K562 (cell line): ENCODE measurements at regions of chr1 and their contacts with region 1.

Region 1: GRCh38 chr1:202315576-202316168 is 26.1 kb downstream of the UBE2T start:
- DNase-seq: peak; percentile 80 to 82 (median 81)
- ATAC-seq: peak; percentile 95
- H3K4me3 ChIP-seq: no peak overlapping the region
- H3K27ac ChIP-seq: no peak overlapping the region
- H3K4me1 ChIP-seq: peaks cover 0 to 12% of the 10 kb centered on the region in 2 experiments; a peak in 1 of 5 replicates
- H3K27me3 ChIP-seq: peaks cover 20 to 52% of the 10 kb centered on the region in 2 experiments
- CTCF ChIP-seq: peak; percentile 94 to 98 (median 97)
- EP300 ChIP-seq: no peak
- POLR2A ChIP-seq: no peak
- RAD21 ChIP-seq: peak; percentile 85 to 96

Region 2: GRCh38 chr1:201946224-201946908 is 369.3 kb before region 1 on chr1 and contains the start of gene LMOD1:
- CTCF ChIA-PET with region 1: no interaction called
- POLR2A ChIA-PET with region 1: no interaction called
- in situ Hi-C with region 1: no loop called
- intact Hi-C with region 1: no loop called
- DNase-seq: peak; percentile 63 to 89 (median 77)
- ATAC-seq: peak; percentile 84
- H3K4me3 ChIP-seq: peak within 1 kb of the TSS; percentile 12
- H3K27ac ChIP-seq: no peak within 1 kb of the TSS; the same call in 2 of the 3 replicates
- H3K4me1 ChIP-seq: peaks cover 27 to 36% of the 10 kb centered on the region in 2 experiments
- H3K27me3 ChIP-seq: no peaks in the 10 kb centered on the region
- CTCF ChIP-seq: no peak
- EP300 ChIP-seq: no peak
- POLR2A ChIP-seq: peak; percentile 37; the same call in 1 of the 2 replicates
- RAD21 ChIP-seq: 0 out of 4 replicates have a peak, but pooled peaks of 1 of the 2 experiments have one; percentile 3
- polyA plus RNA-seq, gene LMOD1: 0.03 TPM in 1 of 2 experiments, not detected in the other

Region 3: DNA sequence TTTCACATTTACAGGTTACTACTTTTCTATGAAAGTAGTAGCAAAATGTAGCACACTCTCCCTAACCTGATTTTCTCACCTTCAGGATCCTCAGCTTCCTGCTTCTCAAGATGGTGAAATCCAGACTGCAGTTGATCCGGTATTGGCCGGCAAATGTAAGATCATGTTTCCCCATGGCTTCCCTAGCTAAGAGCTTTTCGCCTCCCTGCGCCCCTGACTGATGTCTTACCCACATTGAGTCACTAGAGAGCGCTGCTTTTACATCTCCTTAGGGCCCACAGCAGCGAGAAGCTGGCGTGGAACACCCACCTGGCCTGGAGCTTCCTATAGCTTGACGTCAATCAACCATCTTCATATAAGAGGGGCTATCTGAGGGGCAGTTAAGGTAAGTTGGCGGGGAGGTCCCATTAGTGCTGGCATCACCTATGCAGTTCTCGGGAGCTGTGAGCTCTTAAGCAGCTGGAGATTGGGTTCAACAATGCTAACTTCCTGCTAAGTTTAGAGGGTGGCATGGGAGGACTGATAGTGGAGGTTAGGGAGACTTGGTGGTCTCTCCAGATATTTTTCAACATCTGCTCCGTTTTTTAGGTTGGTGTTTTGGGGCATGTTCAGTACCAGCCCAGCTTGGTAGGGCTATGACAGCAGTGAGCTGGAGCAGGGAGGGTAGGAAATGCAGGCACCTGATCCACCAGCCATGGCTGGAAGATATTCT is 160.8 kb before region 1 on chr1:
- CTCF ChIA-PET with region 1: interaction called, 4 read pairs
- POLR2A ChIA-PET with region 1: no interaction called
- in situ Hi-C with region 1: no loop called
- intact Hi-C with region 1: loop called (anchors 1 kb)
- DNase-seq: peak; percentile 60 to 84 (median 66)
- ATAC-seq: peak; percentile 77
- H3K4me3 ChIP-seq: no peak overlapping the region
- H3K27ac ChIP-seq: peak overlapping the region; percentile 27; the same call in 2 of the 3 replicates
- H3K4me1 ChIP-seq: peaks cover 39 to 61% of the 10 kb centered on the region in 2 experiments
- H3K27me3 ChIP-seq: no peaks in the 10 kb centered on the region
- CTCF ChIP-seq: peak; percentile 85 to 88 (median 87)
- EP300 ChIP-seq: no peak
- POLR2A ChIP-seq: no peak
- RAD21 ChIP-seq: peak; percentile 51 to 77; a peak in 3 of 4 replicates

Region 4: GRCh38 chr1:202192770-202193613 is 122.7 kb before region 1 on chr1:
- CTCF ChIA-PET with region 1: interaction called, 16 read pairs
- POLR2A ChIA-PET with region 1: no interaction called
- in situ Hi-C with region 1: no loop called
- intact Hi-C with region 1: loop called (anchors 1 kb)
- DNase-seq: peak; percentile 76 to 86 (median 83)
- ATAC-seq: peak; percentile 78
- H3K4me3 ChIP-seq: no peak overlapping the region
- H3K27ac ChIP-seq: no peak overlapping the region
- H3K4me1 ChIP-seq: peaks cover 2 to 25% of the 10 kb centered on the region in 2 experiments; a peak in 4 of 5 replicates
- H3K27me3 ChIP-seq: peaks cover 14 to 41% of the 10 kb centered on the region in 2 experiments; a peak in 4 of 5 replicates
- CTCF ChIP-seq: peak; percentile 93 to 95 (median 95)
- EP300 ChIP-seq: no peak
- POLR2A ChIP-seq: no peak
- RAD21 ChIP-seq: peak; percentile 62 to 86

Region 5: DNA sequence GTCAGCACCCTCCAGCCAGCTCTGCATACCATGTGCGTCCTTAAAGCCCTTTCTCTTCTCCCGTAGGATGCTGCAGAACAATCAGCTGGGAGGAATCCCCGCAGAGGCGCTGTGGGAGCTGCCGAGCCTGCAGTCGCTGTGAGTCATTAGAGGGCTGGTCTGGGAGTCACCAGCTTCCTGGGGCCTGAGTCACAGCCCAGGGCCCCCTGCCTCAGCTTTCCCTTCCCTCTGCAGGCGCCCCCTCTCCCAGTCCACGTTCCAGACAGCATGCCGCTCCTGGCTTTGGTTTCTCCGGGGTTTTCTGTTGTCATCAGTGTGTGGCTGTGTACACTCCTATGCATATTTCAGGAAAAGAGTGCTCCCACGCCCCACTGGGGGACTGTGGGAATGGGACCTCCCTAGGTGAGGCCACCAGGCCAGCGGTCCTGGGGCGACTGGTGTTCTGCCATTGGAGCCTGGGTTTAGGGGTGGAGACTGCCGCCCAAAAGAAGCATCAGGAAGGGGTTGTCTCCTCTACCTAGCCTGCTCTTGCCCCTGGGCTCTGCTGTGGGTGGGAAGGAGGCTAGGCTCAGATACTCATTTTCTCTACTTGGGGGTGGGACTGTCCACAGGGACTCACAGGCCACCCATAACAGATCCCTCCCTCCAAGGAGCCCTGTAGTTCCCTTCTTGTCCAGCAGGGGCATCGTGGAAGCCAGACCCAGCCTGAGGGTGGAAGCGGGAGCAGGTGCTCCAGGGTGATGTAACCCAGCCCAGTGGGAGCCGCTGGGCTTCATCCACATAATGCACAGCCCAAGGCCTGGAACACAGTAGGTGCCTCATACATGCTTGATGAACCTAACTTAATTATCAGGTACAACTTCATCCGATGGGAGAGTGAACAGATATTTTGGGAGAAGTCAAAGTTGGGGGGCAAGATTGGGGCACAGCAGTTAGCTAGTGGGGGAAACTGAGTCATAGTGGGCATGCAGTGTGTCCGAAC is 79.5 kb before region 1 on chr1:
- CTCF ChIA-PET with region 1: interaction called, 3 read pairs
- POLR2A ChIA-PET with region 1: no interaction called
- in situ Hi-C with region 1: no loop called
- intact Hi-C with region 1: loop called (anchors 2 kb)
- DNase-seq: peak; percentile 89 to 97 (median 94)
- ATAC-seq: peak; percentile 95
- H3K4me3 ChIP-seq: no peak overlapping the region
- H3K27ac ChIP-seq: no peak overlapping the region
- H3K4me1 ChIP-seq: peaks cover 9 to 10% of the 10 kb centered on the region in 2 experiments; a peak in 4 of 5 replicates
- H3K27me3 ChIP-seq: peaks cover 11 to 57% of the 10 kb centered on the region in 2 experiments; a peak in 4 of 5 replicates
- CTCF ChIP-seq: peak; percentile 90 to 99 (median 92)
- EP300 ChIP-seq: 0 out of 2 replicates have a peak, but pooled peaks have one; percentile 20
- POLR2A ChIP-seq: no peak
- RAD21 ChIP-seq: peak in 1 of 2 experiments; percentile 45; a peak in 2 of 4 replicates

Region 6: GRCh38 chr1:202716654-202717053 is 401.0 kb after region 1 on chr1:
- CTCF ChIA-PET with region 1: interaction called, 3 read pairs
- POLR2A ChIA-PET with region 1: no interaction called
- in situ Hi-C with region 1: no loop called
- intact Hi-C with region 1: loop called (anchors 5 kb)
- DNase-seq: no peak
- ATAC-seq: no peak
- H3K4me3 ChIP-seq: no peak overlapping the region
- H3K27ac ChIP-seq: no peak overlapping the region
- H3K4me1 ChIP-seq: no peaks in the 10 kb centered on the region
- H3K27me3 ChIP-seq: peaks cover 48 to 60% of the 10 kb centered on the region in 2 experiments
- CTCF ChIP-seq: no peak
- EP300 ChIP-seq: no peak
- POLR2A ChIP-seq: no peak
- RAD21 ChIP-seq: no peak